IMR-90 (cell line): ENCODE measurements at regions of chr6 and their contacts with region 1.

Region 1: GRCh38 chr6:1604158-1605030 is 5.3 kb upstream of the FOXC1 start:
- DNase-seq: peak; percentile 36
- ATAC-seq: peak; percentile 93
- H3K4me3 ChIP-seq: peak overlapping the region; percentile 45
- H3K27ac ChIP-seq: no peak overlapping the region
- H3K4me1 ChIP-seq: peaks cover 2% of the 10 kb centered on the region; the same call in 1 of the 2 replicates
- H3K27me3 ChIP-seq: peaks cover 29% of the 10 kb centered on the region
- CTCF ChIP-seq: peak; percentile 95
- POLR2A ChIP-seq: no peak
- RAD21 ChIP-seq: peak; percentile 97

Region 2: GRCh38 chr6:2196079-2196679 is 591.8 kb after region 1 on chr6:
- CTCF ChIA-PET with region 1: no interaction called
- POLR2A ChIA-PET with region 1: no interaction called
- dilution Hi-C with region 1: no loop called
- in situ Hi-C with region 1: no loop called
- intact Hi-C with region 1: loop called (anchors 1 kb)
- DNase-seq: peak; percentile 61
- ATAC-seq: peak; percentile 84
- H3K4me3 ChIP-seq: no peak overlapping the region
- H3K27ac ChIP-seq: no peak overlapping the region
- H3K4me1 ChIP-seq: peaks cover 8% of the 10 kb centered on the region; the same call in 1 of the 2 replicates
- H3K27me3 ChIP-seq: no peaks in the 10 kb centered on the region
- CTCF ChIP-seq: peak; percentile 72
- POLR2A ChIP-seq: no peak
- RAD21 ChIP-seq: peak; percentile 81

Region 3: GRCh38 chr6:2245094-2245876 is 640.9 kb after region 1 on chr6 and contains the start of gene GMDS:
- CTCF ChIA-PET with region 1: no interaction called
- POLR2A ChIA-PET with region 1: no interaction called
- dilution Hi-C with region 1: no loop called
- in situ Hi-C with region 1: no loop called
- intact Hi-C with region 1: loop called (anchors 5 kb)
- DNase-seq: peak; percentile 91
- ATAC-seq: peak; percentile 99
- H3K4me3 ChIP-seq: peak within 1 kb of the TSS; percentile 88
- H3K27ac ChIP-seq: peak within 1 kb of the TSS; percentile 90
- H3K4me1 ChIP-seq: peaks cover 5% of the 10 kb centered on the region
- H3K27me3 ChIP-seq: no peaks in the 10 kb centered on the region
- CTCF ChIP-seq: no peak
- POLR2A ChIP-seq: peak; percentile 86
- RAD21 ChIP-seq: peak; percentile 14; the same call in 1 of the 2 replicates
- total RNA-seq, gene GMDS: 7.3 and 9.4 TPM in 2 replicates